ENCODE measurements at regions of chrX and their contacts with region 1.

Region 1: GRCh38 chrX:120697053-120697452 is 67.2 kb upstream of the C1GALT1C1 start:
- DNase-seq: peak; percentile 62
- H3K4me3 Mint-ChIP-seq: peak overlapping the region; percentile 38
- H3K27ac Mint-ChIP-seq: peak overlapping the region; percentile 93
- H3K4me1 Mint-ChIP-seq: peaks cover 21% of the 10 kb centered on the region
- H3K27me3 Mint-ChIP-seq: no peaks in the 10 kb centered on the region

Region 2: GRCh38 chrX:120677004-120677652 is 19.9 kb before region 1 on chrX:
- intact Hi-C with region 1: loop called (anchors 2 kb)
- DNase-seq: no peak
- H3K4me3 Mint-ChIP-seq: no peak overlapping the region
- H3K27ac Mint-ChIP-seq: peak overlapping the region; percentile 58
- H3K4me1 Mint-ChIP-seq: peaks cover 16% of the 10 kb centered on the region
- H3K27me3 Mint-ChIP-seq: no peaks in the 10 kb centered on the region

Region 3: GRCh38 chrX:120736989-120737388 is 39.9 kb after region 1 on chrX:
- intact Hi-C with region 1: loop called (anchors 5 kb)
- DNase-seq: no peak
- H3K4me3 Mint-ChIP-seq: no peak overlapping the region
- H3K27ac Mint-ChIP-seq: no peak overlapping the region
- H3K4me1 Mint-ChIP-seq: peaks cover 21% of the 10 kb centered on the region
- H3K27me3 Mint-ChIP-seq: no peaks in the 10 kb centered on the region

Region 4: GRCh38 chrX:120813982-120814381 is 116.9 kb after region 1 on chrX:
- intact Hi-C with region 1: no loop called
- DNase-seq: no peak
- H3K4me3 Mint-ChIP-seq: no peak overlapping the region
- H3K27ac Mint-ChIP-seq: no peak overlapping the region
- H3K4me1 Mint-ChIP-seq: no peaks in the 10 kb centered on the region
- H3K27me3 Mint-ChIP-seq: no peaks in the 10 kb centered on the region

Measured in activated T-helper 1 cell treated with anti-CD3 and anti-CD28 coated beads, Interleukin-12 subunit alpha, Interleukin-12 subunit beta, Interleukin-2, Interleukin-4 antibody, amounts not matched to agents 30 ng/mL and 10 ng/mL and 1 ng/mL, durations not matched to agents 14 hours and 24 hours and 36 hours (primary cell).